Naive thymus-derived CD8-positive, alpha-beta T cell (primary cell): ENCODE measurements at regions of chr19 and their contacts with region 1.

Region 1: DNA sequence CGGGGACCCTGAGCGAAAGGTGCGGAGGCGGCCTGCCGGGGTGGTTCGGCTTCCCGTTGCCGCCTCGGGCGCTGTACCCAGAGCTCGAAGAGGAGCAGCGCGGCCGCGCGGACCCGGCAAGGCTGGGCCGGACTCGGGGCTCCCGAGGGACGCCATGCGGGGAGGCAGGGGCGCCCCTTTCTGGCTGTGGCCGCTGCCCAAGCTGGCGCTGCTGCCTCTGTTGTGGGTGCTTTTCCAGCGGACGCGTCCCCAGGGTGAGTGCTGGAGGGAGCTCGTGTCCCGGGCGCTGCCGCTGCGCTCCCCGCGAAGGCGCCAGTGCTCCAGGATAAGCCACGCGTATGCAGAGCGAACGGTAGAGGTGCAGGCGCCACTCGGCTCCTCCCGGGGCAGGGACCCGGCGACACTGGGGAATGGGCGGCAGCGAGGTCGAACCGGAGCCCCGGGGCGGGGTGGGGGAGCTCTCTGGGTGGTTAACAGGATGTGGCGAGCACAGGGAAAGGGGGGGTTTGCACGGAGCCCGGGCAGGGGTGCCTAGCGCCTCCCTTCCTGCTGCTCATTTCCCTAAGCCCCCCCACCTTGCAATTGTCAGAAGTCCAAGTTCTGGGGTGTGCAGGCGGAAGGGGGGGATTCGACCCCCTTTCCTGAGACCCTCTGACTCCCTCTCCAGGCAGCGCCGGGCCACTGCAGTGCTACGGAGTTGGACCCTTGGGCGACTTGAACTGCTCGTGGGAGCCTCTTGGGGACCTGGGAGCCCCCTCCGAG is at the start of gene IL27RA:
- DNase-seq: peak; percentile 63 to 95 (median 85)
- ATAC-seq: peak; percentile 78 to 81
- H3K4me3 Mint-ChIP-seq: peak within 1 kb of the TSS; percentile 92 to 98 (median 96)
- H3K27ac Mint-ChIP-seq: peak within 1 kb of the TSS; percentile 90 to 98 (median 97)
- H3K4me1 Mint-ChIP-seq: peaks cover 20 to 50% (median 40%) of the 10 kb centered on the region in 4 donors
- H3K27me3 Mint-ChIP-seq: no peaks in the 10 kb centered on the region
- polyA plus RNA-seq, gene IL27RA: 54.5 to 91.2 (median 83.9) TPM

Region 2: DNA sequence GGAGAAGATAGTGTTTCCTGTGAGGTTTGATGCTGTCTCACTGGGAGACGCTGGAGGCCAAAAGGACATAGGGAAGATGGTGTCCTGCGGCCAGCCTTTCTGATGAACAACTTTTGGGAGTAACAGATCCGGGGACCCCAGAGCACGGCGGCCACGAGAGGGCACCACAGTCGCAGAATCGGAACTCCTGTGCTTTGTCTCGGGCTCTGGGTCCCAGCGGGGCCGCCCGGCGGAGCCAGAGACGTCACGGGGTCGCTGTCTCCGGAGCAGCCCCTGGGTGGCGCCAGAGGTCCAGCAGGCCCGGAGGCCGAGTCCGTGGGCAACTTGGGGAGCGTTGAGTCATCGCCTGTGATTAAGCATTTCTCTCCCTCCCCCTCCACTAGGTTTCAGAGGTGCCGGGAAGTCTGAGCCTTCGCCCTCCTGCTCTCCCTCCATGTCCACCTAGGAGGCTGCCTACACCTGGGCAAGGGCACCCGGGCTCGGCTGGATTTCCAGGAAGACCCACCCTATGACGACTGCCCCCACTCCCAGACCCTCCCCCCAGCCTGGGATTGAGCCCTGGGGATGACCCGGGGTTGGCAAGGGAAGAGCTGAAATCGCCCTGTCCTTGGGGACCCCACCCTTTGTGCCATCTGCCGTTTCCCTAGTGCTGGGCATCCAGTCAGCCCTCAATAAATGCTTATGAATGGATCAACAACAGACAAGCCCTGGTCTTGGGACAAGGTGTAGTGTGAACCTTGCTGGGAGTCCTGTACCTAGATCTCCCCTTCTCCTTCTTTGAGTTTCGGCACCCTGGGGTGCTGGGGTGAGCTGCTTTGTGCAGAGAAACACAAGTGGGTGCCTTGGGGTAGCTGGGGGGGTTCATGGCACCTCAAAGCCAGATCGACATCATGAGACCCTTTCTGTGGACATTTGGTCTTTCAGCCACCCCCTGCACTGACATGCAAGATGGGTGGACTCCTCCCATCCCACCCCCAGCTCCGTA is 151.5 kb before region 1 on chr19:
- POLR2A ChIA-PET with region 1: interaction called, 41 read pairs
- DNase-seq: peak; percentile 93 to 98 (median 95)
- ATAC-seq: peak; percentile 94
- H3K4me3 Mint-ChIP-seq: peak overlapping the region; percentile 47 to 77 (median 67)
- H3K27ac Mint-ChIP-seq: peak overlapping the region in 9 of 10 donors; percentile 26 to 81 (median 74)
- H3K4me1 Mint-ChIP-seq: peaks cover 7 to 46% (median 40%) of the 10 kb centered on the region in 4 donors
- H3K27me3 Mint-ChIP-seq: no peaks in the 10 kb centered on the region

Region 3: DNA sequence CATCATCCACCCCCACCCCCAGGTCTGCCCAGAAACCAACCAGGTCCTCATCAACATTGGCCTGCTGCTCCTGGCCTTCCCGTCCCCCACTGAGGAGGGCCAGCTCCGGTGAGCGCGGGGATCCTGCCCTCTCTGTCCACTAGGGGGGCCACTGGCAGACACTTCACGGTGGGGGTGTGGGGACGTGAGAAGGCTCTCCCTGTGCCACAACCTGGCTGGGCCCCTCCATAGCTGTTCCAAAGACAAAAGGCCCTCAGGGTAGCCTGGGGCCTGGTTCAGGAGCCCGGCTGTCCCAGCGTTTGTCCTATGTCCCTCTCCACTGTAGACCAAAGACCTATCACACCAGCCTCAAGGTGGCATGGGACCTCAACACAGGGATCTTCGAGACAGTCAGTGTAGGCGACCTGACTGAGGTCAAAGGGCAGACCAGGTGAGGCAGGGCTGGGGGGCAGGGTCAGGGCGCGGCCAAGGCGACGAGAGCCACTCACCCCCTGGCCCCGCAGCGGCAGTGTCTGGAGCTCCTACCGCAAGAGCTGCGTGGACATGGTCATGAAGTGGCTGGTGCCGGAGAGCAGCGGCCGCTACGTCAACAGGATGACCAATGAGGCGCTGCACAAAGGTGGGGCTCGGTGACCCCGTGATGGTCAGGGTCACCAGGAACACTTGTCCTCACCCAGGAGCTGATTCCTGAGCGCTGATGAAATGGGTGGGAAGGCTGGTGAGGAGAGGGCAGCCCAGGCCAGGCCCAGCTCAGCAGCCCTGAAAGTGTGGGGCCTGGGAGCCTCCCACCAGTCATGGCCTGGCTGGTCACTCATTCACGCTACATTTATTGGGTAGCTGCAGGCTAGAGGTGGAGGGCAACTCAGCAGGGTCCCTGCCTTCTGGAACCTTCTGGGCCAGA is 71.7 kb before region 1 on chr19:
- POLR2A ChIA-PET with region 1: interaction called, 65 read pairs
- DNase-seq: peak in 7 of 10 donors; percentile 22 to 72 (median 39)
- ATAC-seq: peak; percentile 63 to 77
- H3K4me3 Mint-ChIP-seq: no peak overlapping the region
- H3K27ac Mint-ChIP-seq: peak overlapping the region in 3 of 10 donors; percentile 1 to 62 (median 11)
- H3K4me1 Mint-ChIP-seq: peaks cover 0 to 15% (median 3%) of the 10 kb centered on the region in 4 donors
- H3K27me3 Mint-ChIP-seq: no peaks in the 10 kb centered on the region

Region 4: DNA sequence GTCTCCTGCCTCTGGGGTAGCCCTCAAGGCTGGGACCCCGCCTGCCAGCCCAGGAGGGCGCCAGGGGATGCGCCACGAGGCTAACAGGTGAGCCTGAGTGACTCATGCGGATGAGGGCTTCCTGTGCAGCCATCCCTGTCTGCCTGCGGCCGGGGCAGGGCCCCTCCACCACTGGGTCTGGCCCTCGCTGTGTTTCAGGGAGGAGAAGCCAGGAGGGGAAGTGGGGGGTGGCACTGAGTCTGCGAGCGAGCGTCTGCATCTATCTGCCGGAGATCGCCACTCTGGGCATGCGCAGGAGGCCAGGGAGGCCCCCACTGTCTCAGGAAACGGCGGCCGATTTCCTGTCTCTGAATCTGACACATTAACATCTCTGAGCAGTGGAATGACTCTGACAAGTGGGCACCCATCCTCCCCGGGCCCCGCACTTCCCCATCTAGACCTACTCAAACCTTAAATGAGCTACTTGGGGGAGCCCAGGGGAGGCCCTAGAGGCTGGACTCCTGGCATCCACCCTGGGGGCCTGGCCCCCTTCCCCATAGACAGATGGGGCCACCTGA is 45.5 kb before region 1 on chr19:
- POLR2A ChIA-PET with region 1: interaction called, 73 read pairs
- DNase-seq: peak; percentile 96 to 99 (median 98)
- ATAC-seq: peak; percentile 85 to 87
- H3K4me3 Mint-ChIP-seq: peak overlapping the region; percentile 61 to 84 (median 71)
- H3K27ac Mint-ChIP-seq: peak overlapping the region; percentile 91 to 99 (median 96)
- H3K4me1 Mint-ChIP-seq: peaks cover 33 to 91% (median 84%) of the 10 kb centered on the region in 4 donors
- H3K27me3 Mint-ChIP-seq: no peaks in the 10 kb centered on the region

Region 5: DNA sequence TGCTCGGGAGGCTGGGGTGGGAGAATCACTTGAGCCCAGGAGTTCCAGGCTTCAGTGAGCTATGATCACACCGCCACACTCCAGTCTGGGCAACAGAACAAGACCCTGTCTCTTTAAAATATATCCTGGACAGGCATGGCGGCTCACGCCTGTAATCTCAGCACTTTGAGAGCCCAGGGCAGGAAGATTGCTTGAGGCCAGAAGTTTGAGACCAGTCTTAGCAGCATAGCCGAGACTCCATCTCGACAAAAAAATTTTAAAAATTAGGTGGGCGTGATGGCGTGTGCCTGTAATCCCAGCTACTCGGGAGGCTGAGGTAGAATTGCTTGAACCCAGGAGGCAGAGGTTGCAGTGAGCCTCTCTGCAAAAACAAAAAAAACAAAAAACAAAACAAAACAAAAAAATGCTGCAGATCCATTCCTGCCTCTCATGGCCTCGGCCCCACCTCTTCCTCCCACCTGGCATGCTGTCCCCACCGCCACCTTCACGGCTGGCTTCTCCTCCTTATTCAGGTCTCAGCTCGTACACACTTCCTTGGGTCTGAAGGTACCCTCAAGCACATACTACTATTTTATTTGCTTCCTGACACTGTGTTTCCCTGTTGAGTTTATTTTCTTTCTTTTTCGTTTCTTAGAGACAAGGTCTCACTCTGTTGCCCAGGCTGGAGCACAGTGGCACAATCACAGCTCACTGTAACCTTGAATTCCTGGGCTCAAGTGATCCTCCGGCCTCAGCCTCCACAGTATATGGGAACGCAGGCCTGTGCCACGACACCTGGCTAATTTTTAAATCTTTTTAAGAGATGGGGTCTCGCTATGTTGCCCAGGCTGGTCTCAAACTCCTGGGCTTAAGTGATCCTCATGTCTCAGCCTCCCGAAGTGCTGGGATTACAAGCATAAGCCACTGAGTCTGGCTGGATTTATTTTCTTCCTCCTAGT is 30.9 kb before region 1 on chr19:
- POLR2A ChIA-PET with region 1: interaction called, 143 read pairs
- DNase-seq: peak in 2 of 10 donors; percentile 26 to 29
- ATAC-seq: no peak
- H3K4me3 Mint-ChIP-seq: peak overlapping the region; percentile 59 to 83 (median 73)
- H3K27ac Mint-ChIP-seq: peak overlapping the region; percentile 94 to 100 (median 98)
- H3K4me1 Mint-ChIP-seq: peaks cover 26 to 71% (median 58%) of the 10 kb centered on the region in 4 donors
- H3K27me3 Mint-ChIP-seq: no peaks in the 10 kb centered on the region

Region 6: DNA sequence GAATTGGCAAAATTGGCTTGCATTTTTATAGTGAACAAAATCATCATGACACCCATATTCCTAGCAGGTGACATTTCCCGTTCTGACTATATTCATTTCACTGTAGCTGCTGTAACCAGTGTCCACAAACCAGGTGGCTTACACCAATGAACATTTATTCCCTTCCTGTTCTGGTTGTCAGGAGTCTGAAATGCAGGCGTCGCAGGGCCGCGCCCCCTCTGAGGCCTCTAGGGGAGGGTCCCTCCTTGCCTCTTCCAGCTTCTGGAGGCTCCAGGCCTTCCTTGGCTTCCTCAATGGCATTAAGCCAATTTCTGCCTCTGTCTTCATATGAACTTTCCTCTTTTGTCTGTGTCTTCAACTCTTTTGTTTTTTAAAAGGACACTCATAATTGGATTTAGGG is 10.4 kb before region 1 on chr19:
- POLR2A ChIA-PET with region 1: interaction called, 12 read pairs
- DNase-seq: no peak
- ATAC-seq: no peak
- H3K4me3 Mint-ChIP-seq: no peak overlapping the region
- H3K27ac Mint-ChIP-seq: peak overlapping the region in 1 of 10 donors; percentile 35
- H3K4me1 Mint-ChIP-seq: peaks cover 0 to 24% (median 10%) of the 10 kb centered on the region in 4 donors
- H3K27me3 Mint-ChIP-seq: no peaks in the 10 kb centered on the region

Region 7: DNA sequence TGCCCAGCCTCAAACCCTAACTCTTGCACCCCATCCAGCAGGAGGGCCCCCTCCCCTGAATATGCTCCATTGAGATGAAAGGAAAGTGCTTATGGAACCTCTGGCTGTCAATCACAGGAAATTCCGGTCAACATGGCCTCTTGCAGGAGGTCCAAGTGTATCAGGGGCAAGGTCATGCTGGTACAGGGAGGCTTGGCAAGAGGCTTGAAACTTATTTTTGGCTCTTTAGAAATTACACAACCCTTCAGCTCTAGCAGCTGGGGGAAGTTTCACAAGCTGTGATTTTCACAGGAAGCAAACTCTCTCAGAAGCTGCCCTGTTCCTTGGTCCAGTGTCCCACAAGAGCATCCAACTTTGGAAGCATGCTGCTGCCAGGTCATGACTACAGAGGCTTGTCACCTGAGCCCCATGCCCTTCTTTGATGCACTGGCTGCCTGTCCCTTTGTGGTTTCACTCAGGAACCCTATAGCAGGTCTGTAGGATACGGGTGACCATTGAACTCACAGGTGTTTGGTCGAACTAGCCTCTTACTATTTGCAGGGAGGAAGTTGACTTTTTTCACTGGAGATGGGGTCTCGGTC is 96.1 kb after region 1 on chr19:
- POLR2A ChIA-PET with region 1: no interaction called
- DNase-seq: no peak
- ATAC-seq: no peak
- H3K4me3 Mint-ChIP-seq: no peak overlapping the region
- H3K27ac Mint-ChIP-seq: no peak overlapping the region
- H3K4me1 Mint-ChIP-seq: peaks cover 0 to 8% (median under 1%) of the 10 kb centered on the region in 4 donors
- H3K27me3 Mint-ChIP-seq: no peaks in the 10 kb centered on the region